Right ventricle myocardium inferior (tissue), 1 donor: ENCODE measurements at regions of chr11 and their contacts with region 1.

Region 1: DNA sequence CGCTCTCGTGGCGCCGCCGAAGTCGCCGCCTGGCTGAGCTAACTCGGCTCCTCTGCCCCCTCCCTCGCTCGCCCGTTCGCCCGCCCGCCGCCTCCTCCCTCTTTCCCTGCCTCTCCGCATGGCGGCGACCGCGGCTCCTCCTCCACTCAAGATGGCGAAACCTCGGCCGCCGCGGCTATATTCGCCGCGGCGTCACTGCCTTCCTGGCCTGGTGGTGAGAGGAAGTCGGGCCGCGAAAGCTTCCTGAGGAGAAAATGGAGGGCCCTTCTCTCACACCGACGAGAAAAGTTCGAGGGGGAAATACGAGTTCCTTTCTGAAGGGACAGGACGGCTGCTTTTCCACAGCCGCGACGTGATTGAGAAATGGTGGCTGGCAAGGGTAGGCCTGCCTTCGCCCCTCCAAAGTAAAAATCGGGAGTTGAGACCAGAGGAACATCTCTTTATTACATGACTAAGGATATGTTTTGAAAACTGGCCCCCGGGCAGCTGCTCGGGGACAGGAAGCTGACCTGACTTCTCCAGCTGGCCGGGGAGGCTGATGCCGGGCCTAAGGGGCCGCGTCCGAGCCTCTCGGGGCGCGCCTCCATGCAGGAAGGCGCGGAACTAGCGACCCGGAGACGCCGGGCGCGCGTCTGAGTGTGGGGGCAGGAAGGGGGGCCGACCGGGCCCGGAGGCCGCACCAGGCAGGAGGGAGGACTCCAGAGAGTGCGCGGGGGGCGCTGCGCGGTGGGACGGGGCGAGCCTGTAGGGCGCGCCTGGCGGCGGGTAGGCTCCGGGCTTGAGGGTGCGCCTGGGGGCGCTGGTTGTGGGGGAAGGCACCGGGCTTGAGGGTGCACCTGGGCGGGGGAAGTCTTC is at the start of gene DDX6:
- DNase-seq: peak; percentile 98
- ATAC-seq: peak; percentile 84
- total RNA-seq, gene DDX6: 121 TPM

Region 2: GRCh38 chr11:118689851-118690552 is 101.3 kb before region 1 on chr11:
- intact Hi-C with region 1: loop called (anchors 2 kb)
- DNase-seq: peak; percentile 97
- ATAC-seq: peak; percentile 97

Region 3: DNA sequence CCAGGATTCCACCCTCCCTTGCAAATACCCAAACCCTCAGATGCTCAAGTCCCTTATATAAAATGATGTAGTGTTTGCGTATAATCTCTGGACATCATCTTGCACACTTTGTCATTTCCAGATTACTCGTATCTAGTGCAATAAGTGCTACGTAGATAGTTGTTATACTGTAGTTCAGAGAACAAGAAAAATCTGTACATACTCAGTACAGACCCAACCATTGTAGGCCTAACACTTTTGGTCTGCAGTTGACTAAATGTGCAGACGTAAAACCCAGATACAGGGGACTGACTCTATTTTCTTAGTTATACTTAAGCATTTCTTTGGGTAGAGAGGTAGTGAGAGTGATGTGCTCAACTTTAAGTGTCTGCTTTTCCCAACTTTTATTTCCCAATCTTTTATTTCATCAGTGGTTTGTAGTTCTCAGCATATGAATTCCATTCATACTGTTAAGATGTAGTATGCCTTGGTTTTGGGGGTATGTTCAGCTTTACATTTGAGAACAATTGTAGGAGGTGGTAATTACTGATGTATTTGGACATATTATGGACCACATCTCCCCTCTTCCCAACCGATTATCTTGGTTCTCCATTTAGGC is 44.3 kb before region 1 on chr11:
- intact Hi-C with region 1: loop called (anchors 5 kb)
- DNase-seq: no peak
- ATAC-seq: no peak

Region 4: DNA sequence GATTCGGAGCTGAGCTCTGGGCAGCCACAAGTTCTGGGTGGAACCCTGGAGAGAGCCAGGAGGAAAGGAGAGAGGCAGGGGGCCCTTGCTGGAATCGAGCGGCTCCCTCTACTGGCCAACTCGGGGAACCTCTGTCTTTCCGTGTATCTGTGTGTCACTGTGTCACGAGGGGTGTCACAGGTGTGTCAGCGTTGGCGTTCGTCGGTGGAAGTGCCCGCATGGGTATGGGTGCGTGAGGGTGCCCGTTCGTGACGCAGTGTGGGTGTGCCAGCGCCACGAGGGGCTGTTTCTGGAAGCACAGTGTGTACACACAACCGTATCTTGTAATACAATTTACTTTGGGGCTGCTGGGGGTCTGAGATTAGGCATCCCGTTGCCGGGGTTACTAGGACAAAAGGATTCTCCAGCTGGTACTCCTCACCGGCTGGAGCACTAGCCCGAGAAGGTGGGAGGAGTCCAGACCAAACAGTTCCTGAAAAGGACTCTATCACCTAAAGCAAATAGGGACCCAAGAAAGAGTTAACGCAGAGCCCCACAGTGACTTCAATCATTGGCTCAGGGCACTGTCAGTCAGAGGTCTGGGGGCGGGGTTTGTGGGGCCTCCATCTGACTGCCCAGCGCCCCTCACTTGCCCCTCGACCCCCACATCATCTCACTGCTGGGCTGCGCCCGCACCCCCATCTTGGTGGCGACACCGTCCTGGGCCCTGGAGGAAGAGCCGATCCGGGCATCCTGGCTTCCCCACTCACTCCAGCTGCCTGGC is 137.0 kb after region 1 on chr11:
- intact Hi-C with region 1: loop called (anchors 2 kb)
- DNase-seq: peak; percentile 86
- ATAC-seq: peak; percentile 77